Prostate gland (tissue), 2 donors: ENCODE measurements at regions of chr1 and their contacts with region 1.

Region 1: GRCh38 chr1:20485527-20486456 is at the start of gene CAMK2N1:
- DNase-seq: peak; percentile 39
- H3K4me3 ChIP-seq: peak within 1 kb of the TSS; percentile 51 to 55
- H3K27ac ChIP-seq: peak within 1 kb of the TSS; percentile 85 to 90
- H3K4me1 ChIP-seq: no peaks in the 10 kb centered on the region
- H3K27me3 ChIP-seq: no peaks in the 10 kb centered on the region
- CTCF ChIP-seq: no peak
- POLR2A ChIP-seq: no peak
- total RNA-seq, gene CAMK2N1: 12.7 to 17.4 TPM

Region 2: GRCh38 chr1:20361806-20362640 is 123.8 kb before region 1 on chr1:
- intact Hi-C with region 1: loop called (anchors 5 kb)
- DNase-seq: no peak
- H3K4me3 ChIP-seq: no peak overlapping the region
- H3K27ac ChIP-seq: no peak overlapping the region
- H3K4me1 ChIP-seq: peaks cover 11% of the 10 kb centered on the region
- H3K27me3 ChIP-seq: no peaks in the 10 kb centered on the region
- CTCF ChIP-seq: peak; percentile 34 to 59 (median 55)
- POLR2A ChIP-seq: no peak

Region 3: DNA sequence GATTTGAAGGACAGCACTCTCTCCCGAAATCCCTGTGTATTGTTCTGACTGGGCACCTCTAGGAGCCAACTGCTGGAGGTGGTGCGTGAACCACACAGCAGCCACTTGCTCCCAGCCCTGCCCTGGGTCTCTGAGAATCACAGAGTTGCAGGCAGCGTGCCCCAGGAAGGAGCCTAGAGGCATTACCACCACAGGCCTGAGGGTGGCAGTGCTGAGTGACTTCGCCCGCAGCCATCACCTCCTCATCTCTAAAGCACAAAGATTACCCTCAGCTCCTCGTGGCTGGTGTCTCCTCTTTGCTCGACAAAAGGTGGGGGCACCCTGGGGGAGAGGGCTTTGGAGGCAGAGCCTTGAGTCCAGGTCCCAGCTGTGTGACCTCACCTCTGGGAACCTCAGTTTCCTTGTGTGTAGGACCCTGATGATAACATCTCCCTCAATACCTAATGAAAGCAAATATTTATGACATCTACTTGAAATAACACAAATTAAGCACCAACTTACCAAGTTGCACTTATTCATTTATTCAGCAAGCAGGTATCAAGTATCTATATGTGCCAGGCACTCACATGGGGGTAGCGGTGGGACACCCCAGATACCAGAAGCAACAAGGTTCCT is 108.8 kb before region 1 on chr1:
- intact Hi-C with region 1: loop called (anchors 5 kb)
- DNase-seq: no peak
- H3K4me3 ChIP-seq: no peak overlapping the region
- H3K27ac ChIP-seq: no peak overlapping the region
- H3K4me1 ChIP-seq: no peaks in the 10 kb centered on the region
- H3K27me3 ChIP-seq: no peaks in the 10 kb centered on the region
- CTCF ChIP-seq: peak in 3 of 4 experiments; percentile 40 to 61 (median 57)
- POLR2A ChIP-seq: no peak

Region 4: DNA sequence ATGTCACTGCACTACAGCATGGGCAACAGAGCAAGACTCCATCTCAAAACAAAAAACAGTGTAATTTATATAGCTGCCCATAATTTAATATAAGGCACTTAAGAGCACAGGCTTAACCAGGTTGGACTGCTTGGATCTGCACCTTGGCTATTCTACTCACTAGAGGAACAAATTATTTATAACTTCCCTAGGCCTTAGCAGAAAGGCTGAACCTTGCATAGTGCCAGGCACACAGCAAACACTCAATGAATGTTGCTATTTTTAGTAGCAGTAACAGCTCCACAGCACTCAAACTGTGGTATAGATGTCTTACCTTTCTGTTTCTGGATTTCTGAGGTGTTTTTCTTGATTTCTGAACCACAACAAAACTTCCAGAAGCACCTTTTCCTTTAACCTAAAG is 281.5 kb after region 1 on chr1:
- intact Hi-C with region 1: no loop called
- DNase-seq: no peak
- H3K4me3 ChIP-seq: no peak overlapping the region
- H3K27ac ChIP-seq: no peak overlapping the region
- H3K4me1 ChIP-seq: no peaks in the 10 kb centered on the region
- H3K27me3 ChIP-seq: no peaks in the 10 kb centered on the region
- CTCF ChIP-seq: no peak
- POLR2A ChIP-seq: no peak